ENCODE measurements at regions of chr18 and their contacts with region 1.

Region 1: DNA sequence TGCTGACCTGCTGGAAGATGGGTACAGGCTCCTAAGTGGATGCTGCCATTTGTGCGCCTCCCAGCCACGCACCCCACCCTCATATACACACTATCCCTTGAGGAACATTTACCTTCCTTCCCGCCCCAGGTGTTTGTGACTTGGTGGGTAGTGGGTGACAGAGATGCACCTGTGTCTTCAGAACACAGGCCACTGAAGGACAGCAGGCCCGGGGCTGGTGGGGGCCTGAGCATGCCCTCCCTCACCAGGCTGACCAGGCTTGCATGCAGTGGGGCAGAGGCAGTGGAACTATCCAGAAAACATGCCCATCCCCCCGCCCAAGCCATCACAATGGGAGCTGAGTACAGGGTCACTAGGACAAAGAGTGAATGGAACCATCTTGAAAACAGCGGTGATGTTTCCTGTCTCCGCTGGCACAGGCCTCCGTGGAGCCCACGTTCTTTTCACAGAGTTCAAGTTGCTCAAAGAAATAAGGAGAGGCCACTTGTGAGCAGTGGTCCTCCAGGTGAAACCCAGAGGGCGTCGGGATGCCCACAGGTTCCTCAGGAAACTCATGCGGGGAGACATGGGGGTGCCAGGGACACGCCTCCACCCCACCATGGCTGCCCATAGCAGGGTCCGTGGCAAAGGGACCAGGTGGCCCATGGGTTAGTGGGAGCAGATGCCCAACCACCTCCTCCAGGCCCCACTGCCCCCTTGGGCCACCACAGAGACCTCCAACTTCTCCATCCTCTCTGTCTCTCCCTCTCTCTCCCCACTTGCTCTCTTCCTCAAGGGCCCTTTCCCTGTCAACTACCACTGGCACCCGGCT is 90.9 kb downstream of the MALT1 start:
- DNase-seq: no peak
- ATAC-seq: no peak
- H3K4me3 ChIP-seq: no peak overlapping the region
- H3K4me3 Mint-ChIP-seq: no peak overlapping the region
- H3K27ac ChIP-seq: no peak overlapping the region
- H3K27ac Mint-ChIP-seq: no peak overlapping the region
- H3K4me1 ChIP-seq: peaks cover 19% of the 10 kb centered on the region
- H3K4me1 Mint-ChIP-seq: peaks cover 35% of the 10 kb centered on the region
- H3K27me3 ChIP-seq: peaks cover 4 to 21% of the 10 kb centered on the region in 2 experiments
- H3K27me3 Mint-ChIP-seq: peaks cover 30% of the 10 kb centered on the region
- CTCF ChIP-seq: no peak

Region 2: DNA sequence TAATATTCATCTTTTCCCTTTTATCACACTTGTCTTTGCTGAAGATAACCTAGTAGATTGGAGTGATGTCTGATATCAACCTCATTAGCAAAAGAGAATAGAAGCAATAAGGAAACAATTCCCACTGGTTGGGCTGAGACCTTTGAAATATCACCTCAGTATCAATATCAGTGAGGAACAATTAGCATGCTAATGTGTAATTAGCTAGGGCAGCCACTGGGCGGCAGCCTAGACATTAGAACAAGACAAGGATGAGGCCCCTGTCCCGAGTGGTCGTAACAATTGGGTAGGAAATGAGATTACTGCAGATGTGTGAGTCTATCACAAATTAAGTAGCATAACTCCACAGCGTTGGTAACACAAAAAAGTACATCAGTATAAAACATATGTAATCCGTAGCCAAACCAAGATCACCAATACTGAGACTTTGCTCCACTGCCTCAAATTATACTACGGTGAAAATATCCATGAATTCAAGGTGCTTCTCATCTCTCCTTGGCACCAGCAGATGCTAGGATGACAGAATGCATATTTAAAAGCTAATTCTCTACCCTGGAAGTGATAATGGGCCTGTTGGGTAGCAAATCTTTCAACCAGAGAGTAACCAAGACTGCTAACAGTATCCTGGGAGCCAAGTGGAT is 232.3 kb before region 1 on chr18:
- CTCF ChIA-PET with region 1: interaction called, 75 read pairs
- POLR2A ChIA-PET with region 1: interaction called, 19 read pairs
- intact Hi-C with region 1: loop called (anchors 1 kb)
- DNase-seq: peak; percentile 48 to 78 (median 66)
- ATAC-seq: peak; percentile 88
- H3K4me3 ChIP-seq: no peak overlapping the region
- H3K4me3 Mint-ChIP-seq: no peak overlapping the region
- H3K27ac ChIP-seq: no peak overlapping the region
- H3K27ac Mint-ChIP-seq: no peak overlapping the region
- H3K4me1 ChIP-seq: peaks cover 4% of the 10 kb centered on the region
- H3K4me1 Mint-ChIP-seq: peaks cover 5% of the 10 kb centered on the region
- H3K27me3 ChIP-seq: no peaks in the 10 kb centered on the region
- H3K27me3 Mint-ChIP-seq: no peaks in the 10 kb centered on the region
- CTCF ChIP-seq: peak; percentile 96

Region 3: GRCh38 chr18:59033359-59033758 is 271.2 kb after region 1 on chr18:
- CTCF ChIA-PET with region 1: no interaction called
- POLR2A ChIA-PET with region 1: no interaction called
- intact Hi-C with region 1: no loop called
- DNase-seq: no peak
- ATAC-seq: no peak
- H3K4me3 ChIP-seq: no peak overlapping the region
- H3K4me3 Mint-ChIP-seq: no peak overlapping the region
- H3K27ac ChIP-seq: no peak overlapping the region
- H3K27ac Mint-ChIP-seq: no peak overlapping the region
- H3K4me1 ChIP-seq: no peaks in the 10 kb centered on the region
- H3K4me1 Mint-ChIP-seq: no peaks in the 10 kb centered on the region
- H3K27me3 ChIP-seq: peaks cover 2 to 5% of the 10 kb centered on the region in 2 experiments
- H3K27me3 Mint-ChIP-seq: peaks cover 11% of the 10 kb centered on the region
- CTCF ChIP-seq: no peak

Measured in CD4-positive, alpha-beta T cell (primary cell).